ENCODE measurements at regions of chr12 and their contacts with region 1.

Region 1: DNA sequence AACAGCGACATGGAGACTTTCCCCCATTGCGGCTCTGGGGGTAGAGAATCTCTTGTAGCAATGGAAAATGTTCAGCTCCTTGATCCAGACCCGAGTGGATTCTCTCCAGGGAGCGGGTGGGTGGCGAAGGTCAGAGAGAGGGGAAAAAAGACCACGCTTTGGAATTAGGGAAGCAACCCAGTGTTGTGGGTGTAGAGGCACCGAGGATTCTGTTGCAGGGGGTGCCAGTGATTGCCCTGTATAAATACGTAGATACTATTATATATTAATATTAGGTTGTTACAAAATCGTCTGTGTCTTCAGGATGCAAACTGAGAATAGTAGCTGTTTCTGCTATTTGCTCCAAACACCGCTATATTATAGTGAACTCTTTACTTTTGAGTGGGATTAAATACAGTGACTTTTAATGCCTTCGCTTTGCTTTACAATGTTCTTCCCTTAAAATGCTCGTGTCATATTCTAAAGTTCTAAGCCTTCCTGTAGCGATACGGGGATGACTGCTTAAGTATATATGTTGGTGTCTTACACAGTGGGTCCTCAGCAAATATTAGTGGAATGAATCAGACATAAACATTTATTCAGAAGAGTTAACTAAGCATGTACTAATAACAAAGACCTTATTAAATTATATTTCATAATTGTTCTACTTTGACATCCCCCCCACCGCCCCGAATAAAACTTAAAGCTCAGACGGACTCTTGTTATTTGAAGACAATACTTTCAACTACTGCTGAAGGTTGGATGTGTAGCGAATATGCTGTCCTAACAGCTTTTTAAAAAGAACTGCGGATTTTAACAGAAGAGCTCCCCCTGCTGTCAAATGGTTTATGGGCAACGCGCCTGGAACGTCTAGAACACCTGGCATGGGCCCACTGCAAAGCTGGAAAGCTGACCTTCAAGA is 136.4 kb upstream of the KRAS start:
- DNase-seq: peak; percentile 60 to 91 (median 77)
- ATAC-seq: no peak
- H3K4me3 ChIP-seq: peak overlapping the region; percentile 93
- H3K4me3 Mint-ChIP-seq: peak overlapping the region; percentile 96
- H3K27ac ChIP-seq: peak overlapping the region; percentile 100
- H3K27ac Mint-ChIP-seq: peak overlapping the region; percentile 100
- H3K4me1 ChIP-seq: peaks cover 26% of the 10 kb centered on the region
- H3K4me1 Mint-ChIP-seq: peaks cover 43% of the 10 kb centered on the region
- H3K27me3 ChIP-seq: no peaks in the 10 kb centered on the region
- H3K27me3 Mint-ChIP-seq: no peaks in the 10 kb centered on the region
- CTCF ChIP-seq: peak; percentile 84

Region 2: GRCh38 chr12:24991209-24992049 is 395.7 kb before region 1 on chr12:
- CTCF ChIA-PET with region 1: interaction called, 16 read pairs
- POLR2A ChIA-PET with region 1: no interaction called
- intact Hi-C with region 1: loop called in 1 of 2 experiments (anchors 1 kb)
- DNase-seq: peak in 3 of 9 experiments; percentile 15 to 82 (median 76)
- ATAC-seq: peak; percentile 91
- H3K4me3 ChIP-seq: no peak overlapping the region
- H3K4me3 Mint-ChIP-seq: no peak overlapping the region
- H3K27ac ChIP-seq: no peak overlapping the region
- H3K27ac Mint-ChIP-seq: no peak overlapping the region
- H3K4me1 ChIP-seq: no peaks in the 10 kb centered on the region
- H3K4me1 Mint-ChIP-seq: no peaks in the 10 kb centered on the region
- H3K27me3 ChIP-seq: no peaks in the 10 kb centered on the region
- H3K27me3 Mint-ChIP-seq: no peaks in the 10 kb centered on the region
- CTCF ChIP-seq: peak; percentile 84

Region 3: GRCh38 chr12:25208554-25208953 is 178.5 kb before region 1 on chr12:
- CTCF ChIA-PET with region 1: interaction called, 5 read pairs
- POLR2A ChIA-PET with region 1: no interaction called
- intact Hi-C with region 1: loop called in 1 of 2 experiments (anchors 1 kb)
- DNase-seq: no peak
- ATAC-seq: no peak
- H3K4me3 ChIP-seq: no peak overlapping the region
- H3K4me3 Mint-ChIP-seq: no peak overlapping the region
- H3K27ac ChIP-seq: no peak overlapping the region
- H3K27ac Mint-ChIP-seq: peak overlapping the region; percentile 32
- H3K4me1 ChIP-seq: no peaks in the 10 kb centered on the region
- H3K4me1 Mint-ChIP-seq: peaks cover 13% of the 10 kb centered on the region
- H3K27me3 ChIP-seq: no peaks in the 10 kb centered on the region
- H3K27me3 Mint-ChIP-seq: no peaks in the 10 kb centered on the region
- CTCF ChIP-seq: no peak

Region 4: GRCh38 chr12:25250744-25251730 is 136.0 kb before region 1 on chr12 and contains the start of gene KRAS:
- CTCF ChIA-PET with region 1: interaction called, 4 read pairs
- POLR2A ChIA-PET with region 1: interaction called, 13 read pairs
- intact Hi-C with region 1: loop called in 1 of 2 experiments (anchors 1 kb)
- DNase-seq: peak; percentile 84 to 98 (median 91)
- ATAC-seq: peak; percentile 90
- H3K4me3 ChIP-seq: peak within 1 kb of the TSS; percentile 70 to 79
- H3K4me3 Mint-ChIP-seq: peak within 1 kb of the TSS; percentile 93
- H3K27ac ChIP-seq: peak within 1 kb of the TSS; percentile 67 to 75
- H3K27ac Mint-ChIP-seq: peak within 1 kb of the TSS; percentile 95
- H3K4me1 ChIP-seq: peaks cover 11% of the 10 kb centered on the region
- H3K4me1 Mint-ChIP-seq: peaks cover 38% of the 10 kb centered on the region
- H3K27me3 ChIP-seq: no peaks in the 10 kb centered on the region
- H3K27me3 Mint-ChIP-seq: no peaks in the 10 kb centered on the region
- CTCF ChIP-seq: no peak
- total RNA-seq, gene KRAS: 47.1 to 49.3 TPM

Region 5: GRCh38 chr12:25332143-25332542 is 54.9 kb before region 1 on chr12:
- CTCF ChIA-PET with region 1: interaction called, 6 read pairs
- POLR2A ChIA-PET with region 1: interaction called, 3 read pairs
- intact Hi-C with region 1: loop called in 1 of 2 experiments (anchors 5 kb)
- DNase-seq: no peak
- ATAC-seq: no peak
- H3K4me3 ChIP-seq: no peak overlapping the region
- H3K4me3 Mint-ChIP-seq: no peak overlapping the region
- H3K27ac ChIP-seq: no peak overlapping the region
- H3K27ac Mint-ChIP-seq: no peak overlapping the region
- H3K4me1 ChIP-seq: no peaks in the 10 kb centered on the region
- H3K4me1 Mint-ChIP-seq: peaks cover 12% of the 10 kb centered on the region
- H3K27me3 ChIP-seq: no peaks in the 10 kb centered on the region
- H3K27me3 Mint-ChIP-seq: no peaks in the 10 kb centered on the region
- CTCF ChIP-seq: no peak

Region 6: GRCh38 chr12:25459541-25459951 is 72.5 kb after region 1 on chr12:
- CTCF ChIA-PET with region 1: no interaction called
- POLR2A ChIA-PET with region 1: no interaction called
- intact Hi-C with region 1: no loop called
- DNase-seq: peak in 1 of 9 experiments; percentile 6
- ATAC-seq: no peak
- H3K4me3 ChIP-seq: no peak overlapping the region
- H3K4me3 Mint-ChIP-seq: no peak overlapping the region
- H3K27ac ChIP-seq: no peak overlapping the region
- H3K27ac Mint-ChIP-seq: no peak overlapping the region
- H3K4me1 ChIP-seq: no peaks in the 10 kb centered on the region
- H3K4me1 Mint-ChIP-seq: no peaks in the 10 kb centered on the region
- H3K27me3 ChIP-seq: no peaks in the 10 kb centered on the region
- H3K27me3 Mint-ChIP-seq: peaks cover 3% of the 10 kb centered on the region
- CTCF ChIP-seq: no peak

Region 7: GRCh38 chr12:25789541-25789944 is 402.5 kb after region 1 on chr12:
- CTCF ChIA-PET with region 1: no interaction called
- POLR2A ChIA-PET with region 1: no interaction called
- intact Hi-C with region 1: no loop called
- DNase-seq: no peak
- ATAC-seq: no peak
- H3K4me3 ChIP-seq: no peak overlapping the region
- H3K4me3 Mint-ChIP-seq: no peak overlapping the region
- H3K27ac ChIP-seq: no peak overlapping the region
- H3K27ac Mint-ChIP-seq: no peak overlapping the region
- H3K4me1 ChIP-seq: no peaks in the 10 kb centered on the region
- H3K4me1 Mint-ChIP-seq: no peaks in the 10 kb centered on the region
- H3K27me3 ChIP-seq: no peaks in the 10 kb centered on the region
- H3K27me3 Mint-ChIP-seq: no peaks in the 10 kb centered on the region
- CTCF ChIP-seq: no peak

Region 8: DNA sequence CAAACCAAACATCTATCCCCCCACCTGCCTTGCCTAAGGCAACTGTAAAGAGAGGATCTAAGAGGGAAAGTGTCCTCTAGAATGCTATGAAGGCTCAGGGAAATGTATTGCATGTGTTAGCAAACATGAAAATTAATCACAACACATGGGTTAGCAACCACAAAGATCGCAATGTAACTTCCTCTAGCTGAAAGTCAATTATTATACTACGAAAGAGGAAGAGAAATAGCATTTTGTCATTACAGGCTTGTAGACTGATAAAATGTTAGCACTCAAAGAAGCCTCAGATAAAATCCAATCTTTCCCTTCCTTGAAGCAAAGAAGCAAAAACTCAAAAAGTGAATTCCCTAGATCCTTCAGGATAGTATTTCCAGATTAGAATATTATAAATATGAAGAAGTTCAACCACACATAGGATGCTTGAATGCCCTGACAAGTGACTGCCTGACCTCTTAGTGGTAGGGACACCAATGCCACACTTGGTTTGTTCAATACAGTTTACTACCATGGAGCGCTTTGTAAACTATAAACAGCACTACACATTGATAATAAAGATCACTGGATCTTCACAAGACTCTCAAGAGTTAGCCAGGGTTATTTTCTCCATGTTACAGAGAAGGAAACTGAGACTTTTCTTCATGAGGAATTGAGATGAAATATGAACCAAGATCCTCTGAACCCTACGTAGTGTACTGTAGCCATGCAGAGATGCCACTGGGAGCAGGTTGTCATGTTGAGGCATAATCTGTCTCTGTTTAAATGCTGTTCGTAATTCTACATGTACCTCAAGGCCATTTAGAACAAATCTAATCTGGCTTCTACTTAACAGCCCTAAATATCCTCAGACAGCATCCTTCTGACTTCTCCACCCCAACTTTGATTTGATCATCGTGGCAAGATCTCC is 1345.2 kb after region 1 on chr12:
- CTCF ChIA-PET with region 1: no interaction called
- POLR2A ChIA-PET with region 1: no interaction called
- intact Hi-C with region 1: no loop called
- DNase-seq: peak in 1 of 9 experiments; percentile 12
- ATAC-seq: no peak
- H3K4me3 ChIP-seq: no peak overlapping the region
- H3K4me3 Mint-ChIP-seq: no peak overlapping the region
- H3K27ac ChIP-seq: no peak overlapping the region
- H3K27ac Mint-ChIP-seq: no peak overlapping the region
- H3K4me1 ChIP-seq: no peaks in the 10 kb centered on the region
- H3K4me1 Mint-ChIP-seq: peaks cover 70% of the 10 kb centered on the region
- H3K27me3 ChIP-seq: no peaks in the 10 kb centered on the region
- H3K27me3 Mint-ChIP-seq: no peaks in the 10 kb centered on the region
- CTCF ChIP-seq: no peak

Region 9: DNA sequence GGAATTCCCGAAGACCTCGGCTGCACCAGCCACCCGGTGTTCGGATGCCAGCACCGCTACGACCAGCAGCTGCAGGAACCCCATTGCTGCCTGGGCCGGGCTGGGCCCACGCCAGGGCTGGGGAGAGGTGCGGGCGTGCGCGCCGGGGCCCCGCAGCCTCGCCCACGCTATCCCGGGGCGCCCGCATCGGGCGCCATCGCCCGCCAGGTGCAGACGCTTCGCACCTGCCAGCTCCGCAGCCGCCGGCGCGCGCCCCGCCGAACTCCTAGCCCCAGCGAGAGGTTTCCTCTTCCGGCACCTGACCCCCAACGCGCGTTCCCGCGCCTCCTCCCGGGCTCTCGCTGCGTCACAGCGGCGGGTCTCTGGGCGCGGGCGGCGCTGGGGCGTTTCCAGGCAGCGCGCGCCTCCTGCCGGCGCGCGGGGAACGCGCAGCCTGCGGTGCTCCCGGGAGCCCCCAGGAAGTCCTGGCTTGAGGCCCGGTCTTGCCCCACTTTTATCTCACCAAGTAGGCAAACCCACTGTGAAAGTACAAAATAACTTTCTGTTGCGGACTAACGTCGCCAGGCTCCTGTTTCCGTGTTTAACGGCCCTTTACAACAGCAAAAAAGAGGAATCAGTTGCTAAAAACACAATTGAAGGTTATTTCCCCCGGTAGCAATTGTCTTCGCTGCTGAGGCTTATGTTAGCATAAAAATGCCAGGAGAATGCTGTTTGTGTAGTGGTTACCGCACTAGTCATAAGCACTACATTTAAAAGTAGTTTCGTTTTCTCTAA is 1627.2 kb after region 1 on chr12 and contains the start of gene TM7SF3:
- CTCF ChIA-PET with region 1: no interaction called
- POLR2A ChIA-PET with region 1: no interaction called
- intact Hi-C with region 1: loop called in 1 of 2 experiments (anchors 5 kb)
- DNase-seq: peak; percentile 92 to 98 (median 96)
- ATAC-seq: peak; percentile 89
- H3K4me3 ChIP-seq: peak within 1 kb of the TSS; percentile 87 to 93
- H3K4me3 Mint-ChIP-seq: peak within 1 kb of the TSS; percentile 93
- H3K27ac ChIP-seq: peak within 1 kb of the TSS; percentile 80 to 98
- H3K27ac Mint-ChIP-seq: peak within 1 kb of the TSS; percentile 92
- H3K4me1 ChIP-seq: peaks cover 25% of the 10 kb centered on the region
- H3K4me1 Mint-ChIP-seq: peaks cover 51% of the 10 kb centered on the region
- H3K27me3 ChIP-seq: no peaks in the 10 kb centered on the region
- H3K27me3 Mint-ChIP-seq: no peaks in the 10 kb centered on the region
- CTCF ChIP-seq: peak; percentile 98
- total RNA-seq, gene TM7SF3: 5.8 to 7.2 TPM

Measured in CD8-positive, alpha-beta T cell (primary cell).